AG04450 (cell line): ENCODE measurements at regions of chr16 and their contacts with region 1.

Region 1: DNA sequence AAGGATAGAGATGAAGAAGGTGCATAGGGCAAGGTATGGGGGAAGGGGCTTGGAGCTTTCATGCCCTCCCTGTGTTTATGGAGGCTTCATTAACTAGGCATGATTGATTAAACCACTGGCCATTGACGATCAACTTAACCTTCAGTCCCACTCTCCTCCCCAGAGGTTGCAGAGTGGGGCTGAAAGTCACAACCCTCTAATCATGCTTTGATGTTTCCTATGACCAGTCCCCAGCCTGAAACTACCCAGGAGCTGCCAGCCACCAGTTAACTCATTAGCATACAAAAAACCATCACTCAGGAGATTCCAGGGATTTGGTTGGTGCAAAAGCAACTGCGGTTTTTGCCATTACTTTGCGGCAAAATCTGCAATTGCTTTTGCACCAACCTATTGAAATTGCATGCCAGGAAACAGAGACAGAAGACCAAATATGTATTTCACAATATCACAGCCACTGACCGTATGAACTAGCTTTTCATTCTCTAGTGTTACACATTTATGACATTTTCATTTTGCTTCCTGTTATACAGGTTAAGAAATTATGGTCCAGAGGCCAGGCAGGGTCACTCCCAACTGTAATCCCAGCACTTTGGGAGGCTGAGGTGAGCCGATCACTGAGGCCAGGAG is 5.4 kb downstream of the GFOD2 start:
- DNase-seq: no peak
- H3K4me3 ChIP-seq: no peak overlapping the region
- H3K27ac ChIP-seq: no peak overlapping the region
- H3K27me3 ChIP-seq: no peaks in the 10 kb centered on the region
- CTCF ChIP-seq: no peak

Region 2: DNA sequence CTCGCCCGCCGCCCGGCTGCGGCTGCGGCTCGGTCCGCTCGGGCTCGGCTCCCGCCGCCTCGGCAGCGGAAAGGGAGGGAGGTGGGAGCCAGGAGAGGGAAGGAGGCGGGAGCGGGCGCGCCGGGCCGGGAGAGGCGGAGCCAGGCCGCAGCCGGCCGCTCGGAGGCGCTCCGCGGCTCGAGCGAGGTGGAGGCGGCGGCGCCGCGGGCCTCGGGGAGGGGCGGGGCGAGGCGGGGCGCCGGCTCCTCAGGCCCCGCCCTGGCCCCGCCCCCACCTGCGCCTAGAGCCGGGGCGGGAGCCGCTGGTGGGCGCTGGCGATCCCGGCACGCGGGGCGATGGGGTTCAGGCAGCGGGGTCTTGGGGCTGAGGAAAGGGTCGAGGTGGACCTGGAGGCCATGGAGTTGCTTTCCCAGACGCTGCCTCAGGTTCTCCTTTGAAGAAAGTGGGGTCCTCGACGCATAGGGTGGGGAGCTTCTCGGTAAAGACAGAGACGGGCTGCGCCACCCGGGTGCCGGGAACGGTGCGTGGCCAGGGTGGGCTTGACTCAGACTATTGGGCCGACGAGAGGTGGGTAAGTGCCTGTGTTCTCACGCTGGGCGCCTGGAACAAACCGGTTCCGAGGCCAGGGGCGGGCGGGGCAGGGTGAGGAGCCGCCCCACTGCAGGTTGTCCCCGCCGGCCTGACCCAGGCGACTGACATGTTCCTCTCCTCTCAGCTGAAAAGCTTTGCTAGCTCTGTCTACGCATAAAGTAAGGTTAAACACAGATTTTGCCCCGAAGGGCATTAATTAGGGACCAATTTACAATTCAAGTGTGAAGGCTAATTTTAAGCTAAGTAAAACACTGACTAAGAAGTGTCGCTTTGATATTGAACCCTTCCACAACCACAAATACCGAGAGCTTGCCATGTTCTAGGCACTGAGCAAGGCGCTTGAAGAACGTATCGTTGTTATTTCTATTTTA is 1016.8 kb before region 1 on chr16 and contains the start of gene CMTM4:
- CTCF ChIA-PET with region 1: no interaction called
- POLR2A ChIA-PET with region 1: no interaction called
- DNase-seq: peak; percentile 26
- H3K4me3 ChIP-seq: peak within 1 kb of the TSS; percentile 70
- H3K27ac ChIP-seq: no peak within 1 kb of the TSS
- H3K27me3 ChIP-seq: peaks cover 5% of the 10 kb centered on the region
- CTCF ChIP-seq: no peak; the same call in 1 of the 2 replicates
- polyA plus RNA-seq, gene CMTM4: 16.4 and 19.2 TPM in 2 replicates

Region 3: DNA sequence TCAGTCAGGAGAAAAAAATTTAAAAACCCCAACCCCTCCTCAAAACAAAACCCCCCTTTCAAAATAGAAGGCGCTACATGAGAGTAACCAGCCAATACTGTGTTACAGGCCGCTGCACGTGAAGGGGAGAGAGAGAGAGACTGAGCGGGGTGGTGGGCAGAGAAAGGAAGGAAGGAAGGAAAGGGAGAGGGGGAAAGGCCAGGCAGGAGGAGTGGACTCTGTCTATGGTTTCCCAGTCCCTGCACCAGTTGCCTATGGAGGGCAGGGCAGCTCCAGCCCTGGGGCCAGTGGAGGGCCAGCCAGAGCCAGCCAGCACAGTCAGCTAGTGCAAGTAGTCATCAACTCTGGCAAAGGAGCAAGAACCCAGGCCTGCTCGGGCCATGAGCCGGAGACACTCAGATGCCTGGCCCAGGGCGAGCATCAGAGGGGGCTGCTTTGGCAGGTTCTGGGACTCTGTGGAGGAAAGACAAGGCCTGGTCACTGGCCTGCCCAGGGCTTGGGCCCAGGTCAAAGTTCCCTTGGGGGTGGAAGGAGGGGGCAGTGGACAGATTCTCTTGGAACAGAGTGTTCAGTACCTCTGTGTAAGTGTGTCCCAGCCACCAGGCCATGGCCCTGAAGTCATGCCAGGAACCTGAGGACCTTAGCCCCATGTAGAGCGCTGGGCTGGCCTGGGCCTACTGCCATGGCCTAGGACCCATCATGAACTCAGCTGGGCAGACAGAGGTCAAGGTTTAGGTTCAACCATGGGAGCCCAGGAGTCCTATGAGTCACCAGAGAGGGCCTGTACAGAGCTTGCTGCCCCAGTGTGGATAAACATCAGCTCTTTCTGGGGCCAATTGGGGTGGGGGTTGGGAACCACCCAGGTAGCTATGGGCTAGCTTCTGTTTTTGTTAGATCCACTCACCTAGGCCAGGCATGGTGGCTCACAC is 12.6 kb after region 1 on chr16:
- CTCF ChIA-PET with region 1: no interaction called
- POLR2A ChIA-PET with region 1: no interaction called
- DNase-seq: no peak
- H3K4me3 ChIP-seq: no peak overlapping the region
- H3K27ac ChIP-seq: no peak overlapping the region
- H3K27me3 ChIP-seq: no peaks in the 10 kb centered on the region
- CTCF ChIP-seq: no peak

Region 4: GRCh38 chr16:69276148-69277115 is 1562.7 kb after region 1 on chr16:
- CTCF ChIA-PET with region 1: no interaction called
- POLR2A ChIA-PET with region 1: interaction called, 11 read pairs
- DNase-seq: peak; percentile 95
- H3K4me3 ChIP-seq: peak overlapping the region; percentile 17; the same call in 1 of the 2 replicates
- H3K27ac ChIP-seq: peak overlapping the region; percentile 72
- H3K27me3 ChIP-seq: no peaks in the 10 kb centered on the region
- CTCF ChIP-seq: no peak